Activated naive CD4-positive, alpha-beta T cell treated with anti-CD3 and anti-CD28 coated beads, Interleukin-2, amount 10 ng/mL, durations not matched to agents 7 days and 5 days (primary cell): ENCODE measurements at regions of chr7 and their contacts with region 1.

Region 1: GRCh38 chr7:21427182-21427870 is 557 bp upstream of the SP4 start:
- DNase-seq: peak; percentile 100
- H3K4me3 Mint-ChIP-seq: peak overlapping the region; percentile 98
- H3K27ac Mint-ChIP-seq: peak overlapping the region; percentile 100
- H3K4me1 Mint-ChIP-seq: peaks cover 56% of the 10 kb centered on the region
- H3K27me3 Mint-ChIP-seq: no peaks in the 10 kb centered on the region

Region 2: GRCh38 chr7:21352540-21353387 is 74.6 kb before region 1 on chr7:
- CTCF ChIA-PET with region 1: interaction called, 11 read pairs
- DNase-seq: peak; percentile 42
- H3K4me3 Mint-ChIP-seq: peak overlapping the region; percentile 61
- H3K27ac Mint-ChIP-seq: peak overlapping the region; percentile 96
- H3K4me1 Mint-ChIP-seq: peaks cover 73% of the 10 kb centered on the region
- H3K27me3 Mint-ChIP-seq: no peaks in the 10 kb centered on the region

Region 3: DNA sequence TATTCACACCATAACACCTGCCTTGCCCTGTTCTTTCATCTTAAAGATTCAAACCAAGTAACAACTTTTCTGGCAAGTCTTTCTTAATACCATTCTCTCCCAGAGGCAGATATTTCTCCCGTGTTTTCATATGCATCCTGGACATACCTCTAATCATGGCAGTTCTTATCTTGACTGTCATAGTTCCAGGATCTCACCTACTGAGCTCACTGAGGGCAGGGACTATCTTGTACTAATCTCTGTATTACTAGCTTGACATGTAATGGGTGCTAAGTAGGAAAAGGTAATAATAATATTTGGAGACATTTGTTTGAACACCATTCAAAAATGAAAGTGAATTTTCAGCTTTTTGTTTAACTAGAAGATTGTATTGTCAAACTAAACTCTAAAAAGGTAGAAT is 130.3 kb after region 1 on chr7:
- CTCF ChIA-PET with region 1: no interaction called
- DNase-seq: no peak
- H3K4me3 Mint-ChIP-seq: no peak overlapping the region
- H3K27ac Mint-ChIP-seq: no peak overlapping the region
- H3K4me1 Mint-ChIP-seq: no peaks in the 10 kb centered on the region
- H3K27me3 Mint-ChIP-seq: peaks cover 3% of the 10 kb centered on the region